ENCODE measurements at regions of chr1 and their contacts with region 1.

Region 1: DNA sequence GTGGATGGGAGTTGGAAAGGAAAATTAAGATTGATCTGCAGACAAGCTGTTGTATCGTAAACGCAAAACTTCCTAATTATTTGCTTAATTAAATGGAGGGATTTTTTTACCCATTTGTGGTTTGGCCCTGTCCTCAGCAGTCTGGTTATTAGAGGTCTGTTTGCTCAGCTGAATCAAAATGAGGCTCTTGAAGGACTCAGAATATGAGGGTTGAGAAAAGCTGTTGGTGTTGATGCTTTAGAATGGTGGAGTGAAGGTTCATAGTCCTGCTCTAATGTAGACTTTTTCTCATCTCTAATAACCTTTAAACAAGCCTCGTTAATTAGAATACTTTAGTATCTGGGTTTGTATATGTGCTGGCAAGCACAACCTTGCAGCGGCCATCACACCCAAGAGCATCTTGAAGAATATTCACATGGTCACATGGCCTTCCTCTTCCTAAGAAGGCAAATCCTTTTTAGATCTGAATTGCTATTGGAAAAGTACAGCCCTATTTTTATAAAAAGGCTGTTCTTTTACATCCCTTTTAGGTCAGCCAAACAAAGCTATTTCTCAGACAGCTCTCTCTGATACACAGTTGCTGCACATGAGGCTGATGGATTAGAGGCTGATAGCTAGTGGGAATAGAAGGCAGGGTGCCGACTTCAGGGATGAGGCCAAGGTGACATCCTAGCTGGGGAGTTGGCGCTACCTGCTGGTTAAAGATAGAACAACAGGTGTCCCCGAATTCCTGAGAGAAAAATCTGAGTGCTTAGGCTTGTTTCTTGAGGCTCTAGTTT is 53.8 kb downstream of the MACF1 start:
- DNase-seq: peak; percentile 74 to 93 (median 85)
- H3K4me3 ChIP-seq: no peak overlapping the region
- H3K27ac ChIP-seq: peak overlapping the region in 3 of 5 donors; percentile 21 to 63 (median 23)
- H3K4me1 ChIP-seq: peaks cover 0 to 9% of the 10 kb centered on the region in 2 donors
- H3K27me3 ChIP-seq: no peaks in the 10 kb centered on the region
- CTCF ChIP-seq: peak; percentile 76 to 95 (median 90)
- POLR2A ChIP-seq: no peak

Region 2: GRCh38 chr1:39098546-39099250 is 159.6 kb before region 1 on chr1:
- intact Hi-C with region 1: loop called (anchors 10 kb)
- DNase-seq: peak; percentile 64 to 90 (median 81)
- H3K4me3 ChIP-seq: no peak overlapping the region
- H3K27ac ChIP-seq: peak overlapping the region in 1 of 5 donors; percentile 3
- H3K4me1 ChIP-seq: peaks cover 8 to 24% of the 10 kb centered on the region in 2 donors
- H3K27me3 ChIP-seq: no peaks in the 10 kb centered on the region
- CTCF ChIP-seq: peak; percentile 56 to 86 (median 76)
- POLR2A ChIP-seq: no peak

Region 3: GRCh38 chr1:39189592-39190041 is 68.7 kb before region 1 on chr1:
- intact Hi-C with region 1: loop called (anchors 5 to 10 kb)
- DNase-seq: no peak
- H3K4me3 ChIP-seq: no peak overlapping the region
- H3K27ac ChIP-seq: no peak overlapping the region
- H3K4me1 ChIP-seq: peaks cover 19 to 54% of the 10 kb centered on the region in 2 donors
- H3K27me3 ChIP-seq: no peaks in the 10 kb centered on the region
- CTCF ChIP-seq: no peak
- POLR2A ChIP-seq: no peak

Region 4: DNA sequence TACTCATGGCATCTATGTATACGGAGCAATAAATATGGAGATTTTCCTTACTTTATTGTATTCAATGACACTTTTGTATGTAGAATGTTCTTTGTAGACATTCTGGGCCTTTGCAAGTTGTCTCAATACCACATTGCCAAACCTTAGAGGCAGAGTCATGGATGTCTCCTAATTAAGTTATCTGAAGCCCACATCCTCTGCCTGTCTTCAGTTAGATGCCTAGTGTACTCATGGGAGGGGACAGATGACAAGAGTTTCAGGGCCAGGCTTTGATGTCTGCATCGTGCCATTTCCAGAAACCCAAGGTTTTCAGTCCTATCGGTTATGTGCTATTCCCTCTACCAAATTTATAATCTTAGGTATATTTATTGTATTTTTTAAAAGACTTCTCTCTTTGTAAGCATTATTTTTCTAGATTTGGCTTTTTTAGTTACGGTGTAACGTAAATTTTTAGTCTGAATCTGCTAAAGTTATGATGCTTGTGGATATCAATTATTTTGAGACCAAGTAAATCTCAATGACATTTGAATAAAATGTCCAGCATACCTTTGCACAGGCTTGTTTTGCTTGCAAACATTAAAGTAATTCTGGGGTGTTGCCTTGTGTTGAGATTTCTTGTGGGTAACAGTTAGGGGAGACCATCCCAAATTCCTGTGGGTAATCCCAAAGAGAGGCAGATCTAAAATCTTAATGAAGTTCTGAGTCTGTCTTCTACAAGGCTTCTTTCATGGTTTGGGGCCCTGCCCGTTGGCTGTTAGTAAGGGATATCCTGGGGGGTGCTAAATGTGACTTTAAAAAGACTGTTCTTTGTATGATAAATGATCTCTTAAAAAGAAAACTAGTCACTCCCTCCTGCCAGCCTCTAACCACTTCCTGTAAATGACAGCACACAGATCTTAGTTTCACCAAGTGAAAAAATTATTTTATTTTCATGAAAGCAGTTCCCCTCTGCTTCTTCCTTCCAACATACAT is 61.8 kb before region 1 on chr1:
- intact Hi-C with region 1: loop called (anchors 5 to 10 kb)
- DNase-seq: no peak
- H3K4me3 ChIP-seq: peak overlapping the region in 1 of 4 donors; percentile 14
- H3K27ac ChIP-seq: peak overlapping the region in 4 of 5 donors; percentile 45 to 94 (median 64)
- H3K4me1 ChIP-seq: peaks cover 51 to 78% of the 10 kb centered on the region in 2 donors
- H3K27me3 ChIP-seq: no peaks in the 10 kb centered on the region
- CTCF ChIP-seq: no peak
- POLR2A ChIP-seq: no peak